Activated CD8-positive, alpha-beta T cell treated with anti-CD3 and anti-CD28 coated beads for 36 hours (primary cell): ENCODE measurements at regions of chr12 and their contacts with region 1.

Region 1: GRCh38 chr12:121793838-121794533 is 498 bp upstream of the RHOF start:
- DNase-seq: peak; percentile 95
- ATAC-seq: peak; percentile 60
- H3K4me3 Mint-ChIP-seq: peak overlapping the region; percentile 89
- H3K27ac Mint-ChIP-seq: peak overlapping the region; percentile 91
- H3K4me1 Mint-ChIP-seq: peaks cover 54% of the 10 kb centered on the region
- H3K27me3 Mint-ChIP-seq: no peaks in the 10 kb centered on the region
- CTCF ChIP-seq: peak; percentile 99

Region 2: GRCh38 chr12:121399391-121400331 is 394.3 kb before region 1 on chr12 and contains the start of gene RNF34:
- CTCF ChIA-PET with region 1: no interaction called
- POLR2A ChIA-PET with region 1: no interaction called
- intact Hi-C with region 1: no loop called
- DNase-seq: peak; percentile 99
- ATAC-seq: peak; percentile 92
- H3K4me3 Mint-ChIP-seq: peak within 1 kb of the TSS; percentile 85
- H3K27ac Mint-ChIP-seq: peak within 1 kb of the TSS; percentile 93
- H3K4me1 Mint-ChIP-seq: peaks cover 26% of the 10 kb centered on the region
- H3K27me3 Mint-ChIP-seq: no peaks in the 10 kb centered on the region
- CTCF ChIP-seq: no peak
- total RNA-seq, gene RNF34: 44.1 to 44.9 TPM

Region 3: DNA sequence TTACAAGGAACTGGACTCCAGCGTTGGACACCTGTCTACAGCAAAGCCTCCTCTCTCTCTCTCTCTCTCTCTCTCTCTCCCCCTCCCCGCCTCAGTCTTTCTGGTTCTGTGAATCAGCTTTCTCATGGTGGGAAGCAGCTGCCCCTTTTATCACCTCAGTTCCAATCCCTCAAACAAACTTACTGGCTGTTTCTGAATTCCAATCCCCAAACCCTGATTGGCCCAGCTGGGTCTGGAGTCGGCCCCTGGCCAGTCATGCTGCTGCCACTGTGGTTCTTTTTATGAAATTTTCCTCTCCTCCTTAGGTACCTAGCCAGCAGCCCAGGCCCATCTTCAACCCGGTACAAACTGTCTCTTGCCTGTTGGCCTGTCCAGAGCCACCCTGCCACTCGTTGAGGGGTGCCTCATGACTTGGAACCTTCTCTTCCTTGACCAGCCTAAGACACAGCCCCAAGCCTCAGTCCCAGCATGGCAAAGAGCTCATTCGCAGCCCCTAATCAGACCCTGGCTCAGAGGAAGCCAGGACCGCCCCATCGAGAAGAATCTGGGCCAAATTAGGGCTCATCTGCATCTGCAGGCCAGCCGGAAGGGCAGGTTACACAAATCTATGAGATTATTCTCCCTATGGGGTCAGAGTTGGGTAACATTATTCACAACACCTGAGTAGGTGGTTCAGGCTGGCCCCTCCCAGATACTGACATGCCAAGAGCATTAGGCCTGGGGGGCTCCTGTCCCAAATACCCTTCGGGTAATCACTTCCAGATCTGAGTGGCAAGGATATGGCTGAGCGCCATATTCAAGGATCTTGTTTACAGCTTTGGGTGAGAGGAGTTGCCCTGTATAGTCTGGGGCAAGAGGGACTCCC is 115.0 kb before region 1 on chr12:
- CTCF ChIA-PET with region 1: interaction called, 11 read pairs
- POLR2A ChIA-PET with region 1: no interaction called
- intact Hi-C with region 1: no loop called
- DNase-seq: peak; percentile 30
- ATAC-seq: peak; percentile 34
- H3K4me3 Mint-ChIP-seq: no peak overlapping the region
- H3K27ac Mint-ChIP-seq: peak overlapping the region; percentile 56
- H3K4me1 Mint-ChIP-seq: peaks cover 9% of the 10 kb centered on the region
- H3K27me3 Mint-ChIP-seq: no peaks in the 10 kb centered on the region
- CTCF ChIP-seq: no peak

Region 4: GRCh38 chr12:121712461-121713256 is 81.3 kb before region 1 on chr12 and contains the start of gene TMEM120B:
- CTCF ChIA-PET with region 1: interaction called, 48 read pairs
- POLR2A ChIA-PET with region 1: interaction called, 4 read pairs
- intact Hi-C with region 1: no loop called
- DNase-seq: peak; percentile 80
- ATAC-seq: peak; percentile 90
- H3K4me3 Mint-ChIP-seq: peak within 1 kb of the TSS; percentile 84
- H3K27ac Mint-ChIP-seq: peak within 1 kb of the TSS; percentile 78
- H3K4me1 Mint-ChIP-seq: peaks cover 16% of the 10 kb centered on the region
- H3K27me3 Mint-ChIP-seq: no peaks in the 10 kb centered on the region
- CTCF ChIP-seq: no peak
- total RNA-seq, gene TMEM120B: 11.7 to 12.7 TPM

Region 5: GRCh38 chr12:121811434-121812319 is 17.7 kb after region 1 on chr12:
- CTCF ChIA-PET with region 1: interaction called, 698 read pairs
- POLR2A ChIA-PET with region 1: interaction called, 683 read pairs
- intact Hi-C with region 1: loop called (anchors 2 kb)
- DNase-seq: peak; percentile 67
- ATAC-seq: peak; percentile 84
- H3K4me3 Mint-ChIP-seq: peak overlapping the region; percentile 74
- H3K27ac Mint-ChIP-seq: peak overlapping the region; percentile 79
- H3K4me1 Mint-ChIP-seq: peaks cover 37% of the 10 kb centered on the region
- H3K27me3 Mint-ChIP-seq: no peaks in the 10 kb centered on the region
- CTCF ChIP-seq: peak; percentile 99

Region 6: GRCh38 chr12:121888478-121889266 is 94.7 kb after region 1 on chr12 and contains the start of gene PSMD9:
- CTCF ChIA-PET with region 1: interaction called, 86 read pairs
- POLR2A ChIA-PET with region 1: interaction called, 13 read pairs
- intact Hi-C with region 1: loop called (anchors 2 kb)
- DNase-seq: peak; percentile 98
- ATAC-seq: peak; percentile 96
- H3K4me3 Mint-ChIP-seq: peak within 1 kb of the TSS; percentile 91
- H3K27ac Mint-ChIP-seq: peak within 1 kb of the TSS; percentile 97
- H3K4me1 Mint-ChIP-seq: peaks cover 39% of the 10 kb centered on the region
- H3K27me3 Mint-ChIP-seq: no peaks in the 10 kb centered on the region
- CTCF ChIP-seq: peak; percentile 32
- total RNA-seq, gene PSMD9: 48.6 to 50.7 TPM